Right ventricle myocardium inferior (tissue), 1 donor: ENCODE measurements at regions of chr9 and their contacts with region 1.

Region 1: GRCh38 chr9:134407123-134407808 is 81.0 kb downstream of the RXRA start:
- DNase-seq: peak; percentile 97
- ATAC-seq: peak; percentile 74

Region 2: GRCh38 chr9:134378901-134379338 is 28.3 kb before region 1 on chr9:
- intact Hi-C with region 1: loop called (anchors 2 kb)
- DNase-seq: no peak
- ATAC-seq: peak; percentile 31

Region 3: DNA sequence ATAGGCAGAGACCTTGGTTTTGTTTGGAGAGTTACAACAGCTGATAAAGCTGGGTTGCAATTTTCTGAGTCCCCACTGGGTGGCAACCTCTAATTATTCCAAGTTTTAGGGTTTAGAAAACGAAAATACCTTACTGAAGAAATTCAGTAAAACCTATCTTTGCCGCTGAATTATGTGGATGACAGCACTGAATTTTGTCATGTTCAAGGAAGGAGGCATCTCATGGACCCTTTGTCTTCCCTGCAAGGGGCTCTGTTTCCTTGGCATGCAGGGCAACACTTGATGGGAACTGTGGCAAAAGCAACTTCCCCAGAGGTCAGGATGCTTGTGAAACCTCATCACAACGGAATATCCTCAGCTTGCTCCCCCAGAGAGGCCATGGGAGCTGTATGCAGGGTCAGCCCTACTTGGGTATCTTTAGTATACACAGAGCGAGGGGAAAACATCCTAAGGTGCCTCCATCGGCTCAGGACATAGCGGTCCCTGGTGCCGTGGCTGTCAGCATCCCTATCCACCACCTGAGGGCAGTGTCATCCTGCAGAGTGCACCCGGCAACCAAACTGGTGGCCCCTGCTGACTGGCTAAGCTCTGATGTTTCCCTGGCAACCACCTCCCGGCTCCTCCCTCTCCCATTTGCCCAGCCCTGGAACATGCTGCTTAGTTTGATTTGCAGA is 42.1 kb after region 1 on chr9:
- intact Hi-C with region 1: no loop called
- DNase-seq: peak; percentile 94
- ATAC-seq: peak; percentile 97